ENCODE measurements at regions of chr9 and their contacts with region 1.

Region 1: GRCh38 chr9:92263131-92263530 is 30.4 kb downstream of the IARS1 start:
- DNase-seq: no peak
- H3K4me3 Mint-ChIP-seq: no peak overlapping the region
- H3K27ac Mint-ChIP-seq: no peak overlapping the region
- H3K4me1 Mint-ChIP-seq: no peaks in the 10 kb centered on the region
- H3K27me3 Mint-ChIP-seq: no peaks in the 10 kb centered on the region

Region 2: DNA sequence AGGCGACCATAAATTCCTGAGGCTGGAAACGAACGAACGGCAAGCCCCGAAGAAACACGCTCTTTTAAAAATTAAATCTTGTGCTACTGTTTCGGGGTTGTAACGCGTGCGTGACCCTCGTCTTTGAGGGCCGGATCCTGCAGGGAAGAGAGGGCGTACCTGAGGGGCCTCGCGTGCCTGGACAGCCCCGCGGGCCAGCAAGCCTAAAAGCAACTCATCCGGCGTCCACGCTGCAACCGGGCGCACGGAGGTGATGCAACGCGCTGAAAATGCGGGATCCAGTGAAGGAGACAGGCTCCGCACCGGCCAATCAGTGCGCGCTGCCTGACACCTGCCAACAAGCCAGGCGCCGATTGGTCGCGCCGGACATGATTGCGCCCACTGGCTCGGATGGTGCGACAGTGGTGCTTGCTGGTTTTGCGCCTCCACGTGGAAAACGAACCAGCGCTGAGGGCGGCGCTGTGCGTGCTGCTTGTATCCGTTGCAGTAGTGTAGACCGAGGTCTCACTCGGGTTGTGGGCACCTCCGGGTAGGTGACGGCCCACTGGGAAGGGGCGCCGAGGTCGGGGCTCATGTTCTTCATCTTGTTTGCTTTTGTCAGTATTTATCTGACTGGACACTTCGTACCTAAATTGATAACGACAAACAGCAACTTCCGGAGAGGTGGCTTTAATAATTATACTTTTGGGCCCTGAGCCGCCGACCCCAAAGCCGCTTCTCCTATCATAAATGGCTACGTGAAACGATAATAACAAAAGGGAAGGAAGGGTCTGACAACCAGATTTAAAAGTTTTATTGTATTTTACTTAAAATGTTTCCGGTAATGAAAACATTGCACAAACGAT is 30.5 kb after region 1 on chr9 and contains the start of gene IARS1:
- CTCF ChIA-PET with region 1: interaction called, 3 read pairs
- intact Hi-C with region 1: loop called (anchors 5 kb)
- DNase-seq: peak; percentile 100
- H3K4me3 Mint-ChIP-seq: peak within 1 kb of the TSS; percentile 95
- H3K27ac Mint-ChIP-seq: peak within 1 kb of the TSS; percentile 97
- H3K4me1 Mint-ChIP-seq: peaks cover 49% of the 10 kb centered on the region
- H3K27me3 Mint-ChIP-seq: no peaks in the 10 kb centered on the region
- total RNA-seq, gene IARS1: 271 to 272 TPM

Region 3: GRCh38 chr9:92414566-92414965 is 151.4 kb after region 1 on chr9:
- CTCF ChIA-PET with region 1: no interaction called
- intact Hi-C with region 1: no loop called
- DNase-seq: no peak
- H3K4me3 Mint-ChIP-seq: no peak overlapping the region
- H3K27ac Mint-ChIP-seq: no peak overlapping the region
- H3K4me1 Mint-ChIP-seq: no peaks in the 10 kb centered on the region
- H3K27me3 Mint-ChIP-seq: no peaks in the 10 kb centered on the region